Activated T-helper 2 cell treated with anti-CD3 and anti-CD28 coated beads, Interferon-gamma antibody, Interleukin-2, Interleukin-4, amounts not matched to agents 10 μg/mL and 5 μg/mL and 100 μg/mL, durations not matched to agents 14 hours and 24 hours and 36 hours (primary cell): ENCODE measurements at regions of chr1 and their contacts with region 1.

Region 1: GRCh38 chr1:61318319-61319125 is 236.2 kb downstream of the NFIA start:
- DNase-seq: no peak
- H3K4me3 Mint-ChIP-seq: peak overlapping the region; percentile 53
- H3K27ac Mint-ChIP-seq: peak overlapping the region; percentile 88
- H3K4me1 Mint-ChIP-seq: peaks cover 28% of the 10 kb centered on the region
- H3K27me3 Mint-ChIP-seq: peaks cover 17% of the 10 kb centered on the region

Region 2: GRCh38 chr1:61077676-61078541 is 240.6 kb before region 1 on chr1:
- intact Hi-C with region 1: loop called (anchors 2 kb)
- DNase-seq: peak; percentile 82
- H3K4me3 Mint-ChIP-seq: peak overlapping the region; percentile 87
- H3K27ac Mint-ChIP-seq: peak overlapping the region; percentile 80
- H3K4me1 Mint-ChIP-seq: peaks cover 38% of the 10 kb centered on the region
- H3K27me3 Mint-ChIP-seq: peaks cover 43% of the 10 kb centered on the region

Region 3: DNA sequence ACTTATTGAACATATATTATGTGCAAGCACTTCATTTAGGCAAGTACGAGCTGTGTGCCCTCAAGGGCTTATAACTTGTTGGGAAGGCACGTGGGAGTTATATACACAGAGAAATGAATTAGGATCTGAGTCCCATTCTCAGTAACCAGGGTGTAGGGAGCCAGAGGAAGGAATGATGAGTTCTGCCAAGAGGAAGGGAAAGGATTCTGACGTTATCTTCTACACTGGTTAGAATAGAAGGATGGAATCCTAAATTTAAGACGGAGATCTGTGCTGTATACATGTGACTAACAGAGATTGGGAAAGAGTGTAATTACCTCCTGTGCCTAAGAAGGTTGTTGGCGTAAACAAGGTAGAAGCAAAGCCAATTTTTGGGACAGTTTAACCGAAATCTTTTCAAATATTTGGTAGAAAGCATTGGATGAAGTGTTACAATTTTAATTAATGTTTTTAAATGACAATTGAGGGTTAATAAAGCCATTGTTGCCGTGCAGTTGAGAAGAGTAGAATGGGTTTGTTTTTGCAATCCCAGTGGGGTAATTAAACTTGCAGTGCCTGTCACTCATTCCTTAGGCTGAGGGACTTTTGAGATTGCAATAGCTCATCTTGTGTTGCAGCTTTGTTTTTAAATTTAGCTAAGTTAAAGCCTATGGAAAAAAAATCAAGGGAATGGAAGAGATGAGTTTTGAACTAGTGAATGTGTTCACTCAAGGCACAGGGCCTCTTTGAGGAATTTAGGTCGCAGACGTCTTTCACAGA is 59.0 kb before region 1 on chr1:
- intact Hi-C with region 1: no loop called
- DNase-seq: no peak
- H3K4me3 Mint-ChIP-seq: no peak overlapping the region
- H3K27ac Mint-ChIP-seq: no peak overlapping the region
- H3K4me1 Mint-ChIP-seq: peaks cover 4% of the 10 kb centered on the region
- H3K27me3 Mint-ChIP-seq: peaks cover 6% of the 10 kb centered on the region

Region 4: DNA sequence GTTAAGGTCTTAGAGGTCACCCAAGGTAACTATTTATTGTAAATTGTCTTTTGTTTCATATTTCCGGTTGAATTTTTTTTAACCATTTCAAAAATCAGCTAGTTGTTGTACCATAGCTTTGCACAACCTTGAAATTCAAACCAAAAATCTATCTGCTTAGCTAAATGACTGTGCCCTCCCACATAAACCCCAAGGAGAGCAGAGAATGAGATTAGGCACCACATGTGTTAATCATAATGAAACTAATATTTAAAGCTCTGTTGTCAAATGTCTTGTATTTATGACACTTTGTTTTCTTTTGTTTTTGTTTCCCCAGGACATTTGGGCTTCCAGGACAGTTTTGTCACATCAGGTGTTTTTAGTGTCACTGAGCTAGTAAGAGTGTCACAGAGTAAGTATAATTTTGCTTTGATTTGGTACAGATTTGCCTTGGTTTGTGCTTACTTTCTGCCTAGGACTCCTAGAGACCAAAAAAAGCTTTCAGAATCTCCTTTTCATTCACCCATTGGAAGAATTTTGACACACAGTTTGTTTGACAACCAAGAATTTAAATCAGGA is 13.8 kb after region 1 on chr1:
- intact Hi-C with region 1: loop called (anchors 1 kb)
- DNase-seq: no peak
- H3K4me3 Mint-ChIP-seq: no peak overlapping the region
- H3K27ac Mint-ChIP-seq: peak overlapping the region; percentile 29
- H3K4me1 Mint-ChIP-seq: peaks cover 17% of the 10 kb centered on the region
- H3K27me3 Mint-ChIP-seq: peaks cover 38% of the 10 kb centered on the region